ENCODE measurements at regions of chr17 and their contacts with region 1.

Region 1: GRCh38 chr17:8894673-8895578 is 27.5 kb upstream of the PIK3R6 start:
- DNase-seq: peak; percentile 69
- H3K4me3 Mint-ChIP-seq: no peak overlapping the region
- H3K27ac Mint-ChIP-seq: no peak overlapping the region
- H3K4me1 Mint-ChIP-seq: peaks cover 64% of the 10 kb centered on the region
- H3K27me3 Mint-ChIP-seq: no peaks in the 10 kb centered on the region

Region 2: DNA sequence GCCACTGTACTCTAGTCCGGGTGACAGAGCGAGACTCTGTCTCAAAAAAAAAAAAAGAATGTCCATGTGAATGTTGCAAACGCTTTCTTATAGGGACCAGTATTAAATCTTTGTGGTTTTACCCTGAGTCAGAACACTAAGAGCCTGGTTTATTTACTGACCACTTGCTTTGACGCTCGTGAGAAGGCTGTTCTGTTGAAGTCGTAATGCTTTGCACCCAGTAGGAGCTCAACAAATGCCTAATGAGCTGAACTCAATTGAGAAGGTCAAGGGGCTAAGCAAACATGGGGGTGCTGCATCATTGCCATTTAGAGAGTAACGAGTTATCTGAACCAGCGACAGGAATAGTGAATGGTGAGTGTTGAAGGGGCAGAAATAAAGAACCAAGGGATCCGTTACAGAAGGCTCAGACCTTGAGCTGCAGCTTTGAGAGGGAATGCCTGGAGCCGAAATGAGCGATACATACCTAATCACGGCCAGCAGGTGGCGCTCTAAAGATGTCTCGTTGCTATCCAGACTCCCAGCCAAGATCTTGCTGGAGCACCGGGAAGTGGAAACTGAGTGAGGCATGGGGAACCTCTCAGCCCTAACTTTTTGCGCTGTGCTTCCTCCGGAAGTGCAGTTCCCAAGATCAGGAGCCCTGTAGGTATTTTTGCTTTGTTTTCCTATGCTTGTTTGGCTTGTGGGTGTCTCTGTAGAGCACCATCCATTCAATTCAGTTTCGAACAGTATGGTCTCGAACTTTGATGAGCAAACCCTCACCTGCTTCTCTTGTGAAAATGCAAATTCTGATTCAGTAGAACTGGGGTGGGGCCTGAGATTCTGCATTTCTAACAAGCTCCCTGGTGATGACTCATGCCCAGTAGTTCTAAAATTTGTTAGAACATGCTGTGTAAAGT is 484.7 kb before region 1 on chr17:
- CTCF ChIA-PET with region 1: interaction called, 4 read pairs
- intact Hi-C with region 1: loop called (anchors 10 kb)
- DNase-seq: peak; percentile 87
- H3K4me3 Mint-ChIP-seq: peak overlapping the region; percentile 8
- H3K27ac Mint-ChIP-seq: no peak overlapping the region
- H3K4me1 Mint-ChIP-seq: peaks cover 14% of the 10 kb centered on the region
- H3K27me3 Mint-ChIP-seq: peaks cover 8% of the 10 kb centered on the region

Region 3: GRCh38 chr17:8745586-8746500 is 149.1 kb before region 1 on chr17:
- CTCF ChIA-PET with region 1: interaction called, 3 read pairs
- intact Hi-C with region 1: loop called (anchors 2 kb)
- DNase-seq: peak; percentile 74
- H3K4me3 Mint-ChIP-seq: peak overlapping the region; percentile 81
- H3K27ac Mint-ChIP-seq: peak overlapping the region; percentile 53
- H3K4me1 Mint-ChIP-seq: peaks cover 8% of the 10 kb centered on the region
- H3K27me3 Mint-ChIP-seq: no peaks in the 10 kb centered on the region

Region 4: GRCh38 chr17:8785547-8786413 is 109.1 kb before region 1 on chr17:
- CTCF ChIA-PET with region 1: interaction called, 10 read pairs
- intact Hi-C with region 1: no loop called
- DNase-seq: peak; percentile 83
- H3K4me3 Mint-ChIP-seq: no peak overlapping the region
- H3K27ac Mint-ChIP-seq: no peak overlapping the region
- H3K4me1 Mint-ChIP-seq: peaks cover 2% of the 10 kb centered on the region
- H3K27me3 Mint-ChIP-seq: no peaks in the 10 kb centered on the region

Region 5: GRCh38 chr17:8857919-8858318 is 37.0 kb before region 1 on chr17:
- CTCF ChIA-PET with region 1: interaction called, 5 read pairs
- intact Hi-C with region 1: loop called (anchors 5 kb)
- DNase-seq: peak; percentile 73
- H3K4me3 Mint-ChIP-seq: no peak overlapping the region
- H3K27ac Mint-ChIP-seq: peak overlapping the region; percentile 70
- H3K4me1 Mint-ChIP-seq: peaks cover 23% of the 10 kb centered on the region
- H3K27me3 Mint-ChIP-seq: no peaks in the 10 kb centered on the region

Region 6: GRCh38 chr17:8997994-8998628 is 103.2 kb after region 1 on chr17:
- CTCF ChIA-PET with region 1: interaction called, 20 read pairs
- intact Hi-C with region 1: loop called (anchors 2 kb)
- DNase-seq: peak; percentile 85
- H3K4me3 Mint-ChIP-seq: no peak overlapping the region
- H3K27ac Mint-ChIP-seq: no peak overlapping the region
- H3K4me1 Mint-ChIP-seq: peaks cover 5% of the 10 kb centered on the region
- H3K27me3 Mint-ChIP-seq: peaks cover 16% of the 10 kb centered on the region

Measured in activated naive CD4-positive, alpha-beta T cell treated with anti-CD3 and anti-CD28 coated beads for 36 hours (primary cell).